ENCODE measurements at regions of chr20 and their contacts with region 1.

Region 1: DNA sequence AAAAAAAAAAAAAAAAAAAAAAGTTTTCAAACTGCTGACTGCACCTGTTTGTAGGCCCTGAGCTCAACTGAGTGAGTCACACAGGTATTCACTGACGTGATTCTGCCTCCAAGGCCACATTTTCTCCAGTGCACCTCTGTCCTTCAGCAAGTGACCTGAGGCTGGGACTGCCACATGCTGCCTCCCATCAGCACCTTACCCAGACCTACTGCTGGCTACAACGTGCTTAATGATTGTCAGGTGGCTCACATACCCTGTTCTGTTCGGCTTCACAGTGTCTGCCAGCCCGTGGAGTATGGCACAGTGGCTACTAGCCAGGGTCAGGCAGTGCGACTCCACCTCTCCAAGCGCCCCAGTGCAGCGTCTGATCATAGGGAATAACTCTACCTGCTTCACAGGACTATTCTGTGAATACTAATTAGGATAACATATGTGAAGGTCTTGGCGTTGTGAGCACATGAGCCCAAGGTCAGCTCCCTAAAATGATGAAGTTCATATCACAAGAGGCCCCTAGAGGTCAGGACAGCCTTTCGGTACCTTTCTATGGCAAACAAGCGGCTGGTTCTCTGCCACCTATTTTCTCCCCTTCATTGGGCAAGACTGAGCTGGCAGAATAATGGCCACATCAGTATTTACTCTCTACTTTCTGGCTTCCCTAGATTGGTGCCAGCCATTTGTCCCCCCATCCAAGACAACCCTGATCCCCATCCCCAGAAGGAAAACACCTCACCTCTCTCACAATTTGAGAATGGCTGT is 28.1 kb downstream of the RIPOR3 start:
- DNase-seq: peak; percentile 81 to 96
- H3K4me3 ChIP-seq: no peak overlapping the region
- H3K27ac ChIP-seq: peak overlapping the region; percentile 85
- H3K4me1 ChIP-seq: peaks cover 67% of the 10 kb centered on the region
- H3K27me3 ChIP-seq: no peaks in the 10 kb centered on the region
- CTCF ChIP-seq: peak; percentile 71

Region 2: GRCh38 chr20:50398821-50399554 is 264.3 kb before region 1 on chr20:
- CTCF ChIA-PET with region 1: interaction called, 11 read pairs
- POLR2A ChIA-PET with region 1: no interaction called
- intact Hi-C with region 1: no loop called
- DNase-seq: peak in 1 of 2 experiments; percentile 49
- H3K4me3 ChIP-seq: no peak overlapping the region
- H3K27ac ChIP-seq: no peak overlapping the region
- H3K4me1 ChIP-seq: peaks cover 37% of the 10 kb centered on the region
- H3K27me3 ChIP-seq: no peaks in the 10 kb centered on the region
- CTCF ChIP-seq: no peak

Region 3: GRCh38 chr20:50425085-50425484 is 238.2 kb before region 1 on chr20:
- CTCF ChIA-PET with region 1: no interaction called
- POLR2A ChIA-PET with region 1: no interaction called
- intact Hi-C with region 1: no loop called
- DNase-seq: no peak
- H3K4me3 ChIP-seq: no peak overlapping the region
- H3K27ac ChIP-seq: no peak overlapping the region
- H3K4me1 ChIP-seq: peaks cover 47% of the 10 kb centered on the region
- H3K27me3 ChIP-seq: no peaks in the 10 kb centered on the region
- CTCF ChIP-seq: no peak

Region 4: DNA sequence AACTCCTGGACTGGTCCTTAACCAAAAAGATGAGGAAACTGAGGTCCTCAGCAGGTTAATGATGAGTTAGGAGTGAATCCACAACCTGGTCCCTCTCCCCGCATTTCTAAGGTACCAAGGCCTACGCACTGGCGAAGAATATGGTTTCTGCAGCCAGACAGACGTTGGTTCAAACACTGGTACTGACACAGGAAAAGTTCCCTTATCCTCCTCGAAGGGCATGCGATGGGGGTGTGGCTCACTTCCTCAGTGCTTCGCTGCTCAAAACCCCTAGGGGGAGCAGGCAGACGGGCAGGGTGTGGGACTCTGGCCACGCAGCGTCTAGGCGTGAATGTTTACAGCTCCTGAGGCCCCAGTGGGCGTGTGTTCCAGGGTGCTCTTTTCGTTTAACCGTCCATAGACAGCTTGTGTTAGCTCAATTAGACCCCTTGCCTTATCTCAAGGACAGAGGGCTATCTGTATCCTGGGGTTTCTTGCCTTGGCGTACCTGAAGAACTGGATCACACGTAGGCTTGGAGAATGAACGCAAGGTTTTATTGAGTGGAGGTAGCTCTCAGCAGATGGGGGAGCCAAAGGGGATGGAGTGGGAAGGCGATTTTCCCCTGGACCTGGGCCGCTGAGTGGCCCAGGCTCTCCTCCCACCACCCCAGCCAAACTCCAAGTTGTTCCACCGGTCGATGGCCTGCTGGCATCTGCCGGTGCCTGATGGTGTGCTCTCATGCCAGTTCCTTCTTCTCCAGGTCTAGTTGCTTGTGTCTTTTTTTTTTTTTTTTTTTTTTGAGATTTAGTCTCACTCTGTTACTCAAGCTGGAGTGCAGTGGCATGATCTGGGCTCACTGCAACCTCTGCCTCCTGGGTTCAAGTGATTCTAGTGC is 184.9 kb before region 1 on chr20:
- CTCF ChIA-PET with region 1: no interaction called
- POLR2A ChIA-PET with region 1: no interaction called
- intact Hi-C with region 1: no loop called
- DNase-seq: no peak
- H3K4me3 ChIP-seq: no peak overlapping the region
- H3K27ac ChIP-seq: no peak overlapping the region
- H3K4me1 ChIP-seq: peaks cover 8% of the 10 kb centered on the region
- H3K27me3 ChIP-seq: no peaks in the 10 kb centered on the region
- CTCF ChIP-seq: peak; percentile 39; the same call in 1 of the 2 replicates

Region 5: GRCh38 chr20:50558483-50558947 is 104.8 kb before region 1 on chr20:
- CTCF ChIA-PET with region 1: no interaction called
- POLR2A ChIA-PET with region 1: no interaction called
- intact Hi-C with region 1: no loop called
- DNase-seq: peak; percentile 55 to 64
- H3K4me3 ChIP-seq: no peak overlapping the region
- H3K27ac ChIP-seq: peak overlapping the region; percentile 55
- H3K4me1 ChIP-seq: peaks cover 32% of the 10 kb centered on the region
- H3K27me3 ChIP-seq: no peaks in the 10 kb centered on the region
- CTCF ChIP-seq: no peak

Region 6: DNA sequence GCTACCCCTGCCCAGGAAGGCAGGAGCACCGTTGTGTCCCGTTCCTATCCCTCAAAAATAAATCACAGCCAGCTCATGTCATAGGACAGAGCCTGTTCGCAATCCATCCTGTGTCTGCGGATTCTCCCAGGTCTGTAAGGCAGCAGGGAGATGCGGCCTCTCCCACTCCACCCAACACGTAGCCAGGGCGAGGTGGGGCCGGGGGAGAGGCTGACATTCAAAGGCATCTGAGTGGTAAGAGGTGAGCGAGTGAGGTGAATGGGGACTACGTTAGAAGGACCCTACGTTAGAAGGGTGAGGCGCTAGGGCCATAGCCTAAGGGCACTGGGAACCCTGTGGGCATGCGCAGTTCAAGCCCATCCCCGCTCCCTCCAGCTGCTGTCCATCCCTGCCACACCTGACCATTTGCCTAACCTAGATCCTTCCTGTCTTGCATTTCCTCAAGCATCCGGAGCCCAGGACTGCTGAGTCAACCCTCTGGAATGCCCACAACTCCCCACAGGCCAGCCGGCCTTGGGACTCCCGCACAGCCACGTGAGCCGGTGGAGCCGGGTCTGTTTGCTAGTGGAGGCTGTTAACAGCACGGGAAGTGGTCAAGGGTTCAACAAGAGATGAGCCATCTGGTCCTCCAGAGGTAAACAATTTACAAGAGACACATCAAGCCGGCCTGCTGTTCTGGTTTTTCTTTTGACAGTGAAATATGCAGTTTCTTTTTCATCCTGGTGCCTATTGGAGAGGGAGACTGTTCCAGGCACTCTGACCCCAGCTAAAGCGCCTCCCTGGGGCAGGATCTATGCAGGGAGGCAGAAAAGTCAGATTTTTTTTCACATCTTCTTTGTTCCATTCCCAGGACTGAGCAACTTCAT is 17.8 kb before region 1 on chr20:
- CTCF ChIA-PET with region 1: interaction called, 5 read pairs
- POLR2A ChIA-PET with region 1: interaction called, 14 read pairs
- intact Hi-C with region 1: loop called (anchors 1 kb)
- DNase-seq: peak; percentile 97 to 100
- H3K4me3 ChIP-seq: peak overlapping the region; percentile 16; the same call in 1 of the 2 replicates
- H3K27ac ChIP-seq: peak overlapping the region; percentile 86
- H3K4me1 ChIP-seq: peaks cover 62% of the 10 kb centered on the region
- H3K27me3 ChIP-seq: no peaks in the 10 kb centered on the region
- CTCF ChIP-seq: no peak

Region 7: DNA sequence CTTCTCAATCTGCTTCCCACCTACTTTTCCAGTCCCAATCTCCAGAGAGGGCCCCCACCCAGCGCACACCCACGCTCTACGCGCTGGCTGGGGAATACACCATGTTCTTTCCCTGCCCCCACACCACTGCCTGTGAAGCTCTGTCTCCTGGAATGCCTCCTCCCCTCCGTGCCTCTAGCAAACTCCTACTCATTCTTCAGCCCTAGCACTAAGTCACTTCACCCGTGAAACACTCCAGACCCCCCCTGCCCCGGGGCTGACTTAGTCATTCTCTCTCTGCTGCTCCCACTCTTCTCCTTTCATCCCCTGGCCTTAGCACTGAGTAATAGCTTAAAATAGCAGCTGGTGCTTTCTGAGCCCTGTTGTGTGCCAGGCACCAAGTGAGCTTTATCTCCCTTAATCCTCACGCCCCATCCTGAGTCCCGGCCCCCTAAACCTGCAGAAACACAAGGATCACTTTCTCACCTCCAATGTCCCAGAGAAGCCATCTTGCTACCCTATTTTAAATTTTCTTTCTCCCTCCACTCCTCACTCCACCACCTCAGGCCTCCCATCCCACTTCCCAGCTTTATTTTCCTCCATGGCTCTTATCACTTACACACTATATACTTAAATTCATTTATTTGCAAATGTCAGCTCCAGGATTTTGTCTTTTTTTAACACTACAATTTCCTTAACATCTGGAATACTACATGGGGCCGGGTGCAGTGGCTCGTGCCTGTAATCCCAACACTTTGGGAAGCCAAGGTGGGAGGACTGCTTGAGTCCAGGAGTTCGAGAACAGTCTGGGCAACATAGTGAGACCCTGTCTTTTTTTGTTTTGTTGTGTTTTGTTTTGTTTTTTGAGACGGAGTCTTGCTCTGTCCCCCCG is 61.8 kb after region 1 on chr20:
- CTCF ChIA-PET with region 1: interaction called, 9 read pairs
- POLR2A ChIA-PET with region 1: interaction called, 24 read pairs
- intact Hi-C with region 1: loop called (anchors 1 kb)
- DNase-seq: peak; percentile 88 to 98
- H3K4me3 ChIP-seq: peak overlapping the region; percentile 20; the same call in 1 of the 2 replicates
- H3K27ac ChIP-seq: peak overlapping the region; percentile 71
- H3K4me1 ChIP-seq: peaks cover 63% of the 10 kb centered on the region
- H3K27me3 ChIP-seq: no peaks in the 10 kb centered on the region
- CTCF ChIP-seq: no peak

Region 8: GRCh38 chr20:50744143-50744792 is 81.0 kb after region 1 on chr20:
- CTCF ChIA-PET with region 1: interaction called, 22 read pairs
- POLR2A ChIA-PET with region 1: interaction called, 4 read pairs
- intact Hi-C with region 1: loop called (anchors 1 kb)
- DNase-seq: peak; percentile 72 to 83
- H3K4me3 ChIP-seq: no peak overlapping the region
- H3K27ac ChIP-seq: peak overlapping the region; percentile 76
- H3K4me1 ChIP-seq: peaks cover 94% of the 10 kb centered on the region
- H3K27me3 ChIP-seq: no peaks in the 10 kb centered on the region
- CTCF ChIP-seq: peak; percentile 68

Region 9: DNA sequence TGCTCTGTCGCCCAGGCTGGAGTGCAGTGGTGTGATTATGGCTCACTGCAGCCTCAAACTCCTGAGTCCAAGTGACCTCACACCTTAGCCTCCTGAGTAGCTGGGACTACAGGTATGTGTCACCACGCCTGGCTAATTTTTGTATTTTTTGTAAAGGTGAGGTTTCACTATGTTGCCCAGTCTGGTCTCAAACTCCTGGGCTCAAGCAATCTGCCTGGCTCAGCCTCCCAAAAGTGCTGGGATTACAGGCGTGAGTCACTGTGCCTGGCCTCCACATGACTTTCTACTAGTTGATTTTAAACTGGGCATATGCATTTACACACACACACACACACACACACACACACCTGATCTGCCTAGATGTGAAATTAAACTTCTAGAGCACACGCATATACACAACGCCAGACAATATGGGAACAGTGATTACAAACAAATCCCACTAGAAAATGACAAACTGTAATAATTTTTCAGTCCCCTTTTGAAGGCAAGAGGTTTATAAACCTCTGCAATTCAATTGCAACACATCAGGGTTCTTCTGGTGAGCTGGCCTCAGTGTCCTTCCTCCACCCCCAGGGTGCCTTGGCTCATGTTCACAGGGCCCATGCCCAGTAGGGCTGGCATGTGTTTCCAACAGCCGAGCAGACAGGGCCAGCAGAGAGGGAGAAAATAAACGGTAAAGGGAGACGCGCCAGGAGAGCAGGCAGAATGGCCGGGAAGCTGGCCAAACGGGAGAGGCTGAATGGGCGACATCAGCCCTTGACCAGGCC is 99.3 kb after region 1 on chr20:
- CTCF ChIA-PET with region 1: interaction called, 9 read pairs
- POLR2A ChIA-PET with region 1: interaction called, 30 read pairs
- intact Hi-C with region 1: loop called (anchors 1 kb)
- DNase-seq: peak; percentile 50 to 72
- H3K4me3 ChIP-seq: peak overlapping the region; percentile 22; the same call in 1 of the 2 replicates
- H3K27ac ChIP-seq: peak overlapping the region; percentile 96
- H3K4me1 ChIP-seq: peaks cover 64% of the 10 kb centered on the region
- H3K27me3 ChIP-seq: no peaks in the 10 kb centered on the region
- CTCF ChIP-seq: no peak

Measured in PC-9 (cell line).